Spleen (tissue), 13 donors: ENCODE measurements at regions of chr1 and their contacts with region 1.

Region 1: GRCh38 chr1:161098210-161099068 is at the start of gene KLHDC9:
- DNase-seq: peak; percentile 94
- H3K4me3 ChIP-seq: peak within 1 kb of the TSS; percentile 44 to 80 (median 58)
- H3K27ac ChIP-seq: peak within 1 kb of the TSS; percentile 36 to 76 (median 65)
- H3K4me1 ChIP-seq: peaks cover 15 to 37% (median 32%) of the 10 kb centered on the region in 6 donors
- H3K27me3 ChIP-seq: no peaks in the 10 kb centered on the region
- CTCF ChIP-seq: peak in 3 of 11 experiments; percentile 14 to 47 (median 25)
- POLR2A ChIP-seq: no peak
- total RNA-seq, gene KLHDC9: 1.1 to 2.1 (median 1.3) TPM

Region 2: GRCh38 chr1:160837558-160838205 is 260.8 kb before region 1 on chr1:
- intact Hi-C with region 1: no loop called
- DNase-seq: peak; percentile 95
- H3K4me3 ChIP-seq: peak overlapping the region in 1 of 8 donors; percentile 14
- H3K27ac ChIP-seq: peak overlapping the region; percentile 38 to 89 (median 77)
- H3K4me1 ChIP-seq: peaks cover 24 to 64% (median 35%) of the 10 kb centered on the region in 6 donors
- H3K27me3 ChIP-seq: no peaks in the 10 kb centered on the region
- CTCF ChIP-seq: peak in 10 of 11 experiments; percentile 42 to 80 (median 61)
- POLR2A ChIP-seq: no peak

Region 3: DNA sequence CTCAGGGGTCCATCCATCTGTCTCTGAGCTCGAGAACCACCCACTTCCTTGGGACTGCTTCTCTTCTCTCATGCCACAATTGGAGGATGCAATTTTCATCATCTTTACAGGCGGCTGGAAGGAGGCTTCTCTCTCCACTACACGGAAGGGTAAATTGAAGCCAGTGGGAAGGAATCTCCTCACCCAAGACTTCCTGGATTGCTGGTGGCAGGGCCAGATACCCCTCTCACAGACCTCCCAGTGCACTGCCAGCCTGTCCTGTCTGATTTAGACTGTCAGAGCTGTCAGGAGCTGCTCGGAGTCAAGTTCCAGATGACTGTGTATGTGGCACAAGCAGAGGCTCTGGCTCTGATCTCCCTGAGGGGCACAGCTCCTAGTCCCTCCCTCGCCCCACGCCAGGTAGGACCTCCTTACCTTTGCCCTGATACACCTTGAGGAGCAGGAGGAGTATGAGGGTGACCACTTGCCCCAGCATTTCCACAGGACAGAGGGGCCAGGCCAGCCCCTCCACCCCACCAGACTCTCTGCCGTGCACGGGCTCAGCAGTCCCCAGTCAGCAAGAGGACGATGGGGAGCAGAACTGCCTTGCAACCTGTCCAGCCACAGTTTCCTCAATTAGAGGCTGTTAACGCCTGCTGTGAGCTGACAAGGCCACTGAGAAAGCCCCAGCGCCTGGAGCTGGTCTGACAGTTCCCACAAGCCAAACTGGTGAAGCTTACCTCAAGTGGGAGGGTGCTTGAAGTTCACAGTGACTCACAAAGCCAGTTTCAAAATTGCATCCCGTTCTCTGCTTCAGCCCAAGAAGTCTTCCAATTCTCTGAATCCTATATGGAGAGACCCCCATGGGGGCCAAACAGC is 236.0 kb before region 1 on chr1 and contains the start of gene CD244:
- intact Hi-C with region 1: no loop called
- DNase-seq: peak; percentile 87
- H3K4me3 ChIP-seq: peak within 1 kb of the TSS in 7 of 8 donors; percentile 10 to 66 (median 34)
- H3K27ac ChIP-seq: peak within 1 kb of the TSS in 7 of 8 donors; percentile 46 to 87 (median 66)
- H3K4me1 ChIP-seq: peaks cover 0 to 72% (median 27%) of the 10 kb centered on the region in 6 donors
- H3K27me3 ChIP-seq: peaks cover 0 to 9% (median 0%) of the 10 kb centered on the region in 7 donors
- CTCF ChIP-seq: no peak
- POLR2A ChIP-seq: no peak
- total RNA-seq, gene CD244: 13.0 to 25.7 (median 18.2) TPM

Region 4: GRCh38 chr1:160997323-160998038 is 101.0 kb before region 1 on chr1:
- intact Hi-C with region 1: loop called (anchors 5 kb)
- DNase-seq: peak; percentile 84
- H3K4me3 ChIP-seq: no peak overlapping the region
- H3K27ac ChIP-seq: peak overlapping the region; percentile 27 to 82 (median 73)
- H3K4me1 ChIP-seq: peaks cover 0 to 51% (median 23%) of the 10 kb centered on the region in 6 donors
- H3K27me3 ChIP-seq: no peaks in the 10 kb centered on the region
- CTCF ChIP-seq: peak; percentile 37 to 80 (median 76)
- POLR2A ChIP-seq: no peak

Region 5: DNA sequence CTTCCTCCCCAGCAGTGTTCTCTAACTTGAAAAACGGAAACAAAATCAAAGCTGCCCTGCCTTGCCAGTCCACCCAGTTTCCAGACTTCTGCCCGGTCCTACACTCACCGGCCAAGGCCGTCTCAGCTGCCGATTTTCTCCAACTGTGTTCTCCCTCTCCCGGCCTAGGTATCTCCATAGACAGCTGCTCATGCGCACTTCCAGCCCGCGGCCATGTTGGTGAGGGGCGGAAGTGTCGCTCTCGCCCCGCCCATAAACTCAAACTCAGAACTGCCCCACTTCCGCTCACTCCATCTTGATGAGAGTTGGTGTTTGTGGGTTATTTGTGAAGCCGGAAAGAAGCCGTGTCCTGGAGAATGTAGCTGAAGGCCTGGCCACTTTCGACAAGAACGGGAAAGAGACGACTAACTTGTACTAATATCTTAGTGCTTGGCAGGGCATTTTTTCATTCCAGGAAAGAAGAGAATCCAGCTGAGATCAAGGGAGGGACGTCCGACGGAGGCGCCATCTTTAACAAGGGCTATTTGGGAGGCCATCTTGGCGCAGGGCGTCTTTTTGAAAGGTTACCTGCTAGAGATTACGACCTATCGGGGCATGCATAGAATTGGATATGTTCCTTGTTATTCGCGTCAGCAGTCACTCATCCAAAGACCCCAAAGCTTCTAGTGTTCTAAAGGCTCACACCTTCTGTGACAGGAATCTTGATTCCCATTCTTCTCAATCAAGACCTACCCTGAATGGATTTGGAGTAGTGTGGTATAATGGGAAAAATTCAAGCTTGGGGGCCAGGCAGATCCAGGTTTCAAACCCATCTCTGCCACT is 52.5 kb before region 1 on chr1 and contains the start of gene USF1:
- intact Hi-C with region 1: loop called (anchors 10 kb)
- DNase-seq: peak; percentile 96
- H3K4me3 ChIP-seq: peak within 1 kb of the TSS; percentile 70 to 98 (median 94)
- H3K27ac ChIP-seq: peak within 1 kb of the TSS; percentile 93 to 99 (median 98)
- H3K4me1 ChIP-seq: peaks cover 20 to 86% (median 50%) of the 10 kb centered on the region in 6 donors
- H3K27me3 ChIP-seq: no peaks in the 10 kb centered on the region
- CTCF ChIP-seq: peak in 1 of 11 experiments; percentile 15
- POLR2A ChIP-seq: peak; percentile 59 to 71 (median 61)
- total RNA-seq, gene USF1: 113 to 158 (median 123) TPM